ENCODE measurements at regions of chr7 and their contacts with region 1.

Region 1: GRCh38 chr7:148503875-148504487 is 86.6 kb upstream of the C7orf33 start:
- DNase-seq: no peak
- H3K4me3 Mint-ChIP-seq: no peak overlapping the region
- H3K27ac Mint-ChIP-seq: no peak overlapping the region
- H3K4me1 Mint-ChIP-seq: peaks cover 32% of the 10 kb centered on the region
- H3K27me3 Mint-ChIP-seq: peaks cover 21% of the 10 kb centered on the region

Region 2: DNA sequence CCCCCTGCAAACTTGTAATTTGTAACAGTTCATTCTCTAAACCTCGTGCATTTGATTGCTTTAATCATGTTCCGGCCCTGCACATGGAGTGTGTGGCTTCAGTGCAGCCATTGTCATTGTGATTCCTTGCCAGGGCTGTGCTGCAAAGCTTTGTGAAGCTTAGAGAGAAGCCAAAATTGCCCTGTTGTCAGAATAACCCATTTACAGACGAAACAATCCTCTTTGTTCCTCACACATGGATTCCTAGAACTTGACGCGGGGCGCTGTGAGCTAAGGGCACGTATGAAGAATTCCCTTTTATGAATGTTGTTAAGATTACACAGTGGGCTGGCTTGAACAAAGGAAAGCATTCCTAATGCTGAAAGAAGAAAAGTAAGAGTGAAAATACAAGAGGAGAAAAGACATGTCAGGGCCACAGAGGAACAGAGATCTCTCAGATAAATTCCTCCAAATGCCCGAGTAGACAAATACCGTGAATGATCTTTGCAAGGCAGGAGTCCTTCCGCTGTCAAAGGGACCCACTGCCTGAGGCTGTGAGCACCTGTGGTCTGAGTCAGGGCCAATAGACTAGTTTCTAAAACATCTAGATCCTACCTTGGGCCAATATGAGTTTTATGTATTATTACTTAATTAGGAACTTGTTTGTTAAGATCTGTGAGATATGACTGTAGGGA is 118.8 kb before region 1 on chr7:
- CTCF ChIA-PET with region 1: no interaction called
- intact Hi-C with region 1: no loop called
- DNase-seq: no peak
- H3K4me3 Mint-ChIP-seq: no peak overlapping the region
- H3K27ac Mint-ChIP-seq: no peak overlapping the region
- H3K4me1 Mint-ChIP-seq: no peaks in the 10 kb centered on the region
- H3K27me3 Mint-ChIP-seq: peaks cover 3% of the 10 kb centered on the region

Region 3: DNA sequence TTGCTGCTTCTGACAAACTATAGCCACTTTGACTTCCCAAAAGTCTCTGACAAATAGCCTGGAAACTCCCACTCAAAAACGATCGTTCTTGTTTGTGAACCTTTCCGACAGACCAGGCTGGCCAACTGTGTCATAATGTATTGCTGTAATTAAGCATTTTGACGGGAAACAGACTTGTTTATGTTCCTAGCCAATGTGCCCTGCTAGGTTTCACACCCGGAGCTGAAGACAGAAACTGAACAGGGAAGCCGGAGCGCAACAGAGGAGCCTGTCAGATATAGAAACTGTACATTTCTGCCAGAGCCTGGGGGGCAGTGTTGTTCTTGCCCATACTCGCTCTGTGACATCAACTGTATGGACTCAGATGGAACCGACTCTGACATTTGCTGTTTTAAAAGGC is 31.2 kb after region 1 on chr7:
- CTCF ChIA-PET with region 1: interaction called, 4 read pairs
- intact Hi-C with region 1: loop called (anchors 1 kb)
- DNase-seq: peak; percentile 79
- H3K4me3 Mint-ChIP-seq: peak overlapping the region; percentile 69
- H3K27ac Mint-ChIP-seq: peak overlapping the region; percentile 76
- H3K4me1 Mint-ChIP-seq: peaks cover 10% of the 10 kb centered on the region
- H3K27me3 Mint-ChIP-seq: peaks cover 10% of the 10 kb centered on the region

Region 4: DNA sequence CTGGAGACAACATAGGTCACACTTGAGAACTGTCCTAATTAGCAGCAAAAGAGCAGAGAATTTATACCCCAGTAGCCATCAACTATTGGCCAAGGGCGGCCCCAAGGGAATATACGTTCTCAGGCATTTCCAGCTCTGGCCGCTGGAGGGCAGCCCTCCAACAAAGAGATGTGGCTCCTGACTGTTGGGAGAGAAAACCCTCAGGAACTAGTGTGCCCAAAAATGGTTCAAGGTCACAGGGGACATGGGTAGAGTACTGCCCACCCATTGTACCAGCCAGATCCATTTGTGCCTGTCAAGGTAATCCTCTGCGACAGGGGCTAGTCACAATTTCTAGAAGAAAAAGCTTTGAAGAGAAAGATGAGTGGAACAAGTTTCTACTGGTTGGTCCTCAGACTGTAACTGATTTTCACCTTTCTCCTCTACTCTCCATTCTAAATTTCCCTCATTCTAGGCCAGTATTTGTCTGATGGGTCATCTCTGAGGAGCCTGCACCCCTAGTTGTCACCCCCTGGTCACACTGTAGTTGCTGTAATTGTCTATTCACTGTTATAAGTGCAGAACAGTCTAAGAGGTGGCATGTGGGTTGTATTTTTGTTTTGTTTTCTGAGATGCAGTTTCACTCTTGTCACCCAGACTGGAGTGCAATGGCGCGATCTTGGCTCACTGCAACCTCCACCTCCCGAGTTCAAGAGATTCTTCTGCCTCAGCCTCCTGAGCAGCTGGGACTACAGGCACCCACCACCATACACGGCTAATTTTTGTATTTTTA is 71.8 kb after region 1 on chr7:
- CTCF ChIA-PET with region 1: interaction called, 4 read pairs
- intact Hi-C with region 1: loop called (anchors 1 kb)
- DNase-seq: peak; percentile 84
- H3K4me3 Mint-ChIP-seq: no peak overlapping the region
- H3K27ac Mint-ChIP-seq: no peak overlapping the region
- H3K4me1 Mint-ChIP-seq: peaks cover 11% of the 10 kb centered on the region
- H3K27me3 Mint-ChIP-seq: no peaks in the 10 kb centered on the region

Region 5: GRCh38 chr7:148633761-148634160 is 129.8 kb after region 1 on chr7:
- CTCF ChIA-PET with region 1: no interaction called
- intact Hi-C with region 1: loop called (anchors 5 kb)
- DNase-seq: peak; percentile 44
- H3K4me3 Mint-ChIP-seq: no peak overlapping the region
- H3K27ac Mint-ChIP-seq: peak overlapping the region; percentile 75
- H3K4me1 Mint-ChIP-seq: peaks cover 26% of the 10 kb centered on the region
- H3K27me3 Mint-ChIP-seq: no peaks in the 10 kb centered on the region

Region 6: DNA sequence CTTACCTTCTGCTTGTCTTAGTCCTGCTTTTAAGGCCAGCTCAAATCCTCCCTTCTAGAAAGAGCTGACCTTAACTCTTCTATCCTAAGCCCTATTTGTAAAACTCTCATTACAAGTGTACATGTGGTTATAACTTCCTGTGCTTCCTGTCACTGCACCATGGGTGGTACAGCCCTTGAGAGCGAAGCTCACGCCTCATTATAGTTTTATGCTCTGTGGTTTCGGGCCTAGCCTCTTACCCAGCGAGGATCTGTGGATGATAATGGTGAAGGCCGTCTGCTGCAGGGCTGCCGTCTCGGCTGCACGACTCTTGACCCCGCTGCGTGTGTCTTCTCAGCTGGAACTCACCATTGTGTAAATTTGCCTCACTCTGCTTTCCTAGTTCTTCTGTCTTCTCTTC is 269.4 kb after region 1 on chr7:
- CTCF ChIA-PET with region 1: no interaction called
- intact Hi-C with region 1: loop called (anchors 1 kb)
- DNase-seq: peak; percentile 54
- H3K4me3 Mint-ChIP-seq: no peak overlapping the region
- H3K27ac Mint-ChIP-seq: peak overlapping the region; percentile 71
- H3K4me1 Mint-ChIP-seq: peaks cover 29% of the 10 kb centered on the region
- H3K27me3 Mint-ChIP-seq: no peaks in the 10 kb centered on the region

Region 7: DNA sequence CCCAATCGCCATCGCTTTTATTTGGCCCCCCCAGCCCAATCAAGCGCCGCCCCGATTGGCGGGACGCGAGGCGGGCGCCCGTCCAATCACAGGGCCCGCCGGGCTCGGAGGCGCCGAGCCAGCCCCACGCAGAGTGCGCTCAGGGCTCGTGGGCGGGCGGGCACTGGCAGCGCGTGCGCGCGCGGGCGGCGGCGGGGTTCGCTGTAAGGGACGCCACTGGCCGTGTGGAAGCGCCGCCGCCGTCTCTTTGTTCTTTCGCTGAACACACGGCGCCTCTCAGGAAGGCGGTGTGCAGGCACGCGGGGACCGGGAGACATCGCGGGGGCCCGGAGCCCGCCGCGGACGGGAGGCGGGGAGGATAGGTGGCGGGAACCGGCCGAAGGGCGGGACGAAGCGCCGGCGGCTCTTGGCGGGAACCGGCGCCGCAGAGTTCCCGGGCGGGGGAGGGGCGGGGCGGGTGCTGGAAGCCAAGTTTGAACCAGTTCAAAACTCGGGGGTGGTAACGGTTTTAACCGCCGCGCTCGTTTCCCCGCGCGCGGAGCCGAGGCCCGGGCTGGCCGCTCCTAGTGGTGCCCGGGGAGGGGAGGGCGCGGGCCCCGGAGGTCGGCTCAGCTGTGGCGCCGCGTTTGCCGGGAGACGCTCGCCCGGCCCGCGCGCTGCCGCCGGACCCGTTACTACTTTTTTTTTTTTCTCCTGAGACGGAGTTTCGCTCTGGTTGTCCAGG is 380.5 kb after region 1 on chr7:
- CTCF ChIA-PET with region 1: no interaction called
- intact Hi-C with region 1: loop called (anchors 1 kb)
- DNase-seq: peak; percentile 93
- H3K4me3 Mint-ChIP-seq: peak overlapping the region; percentile 94
- H3K27ac Mint-ChIP-seq: peak overlapping the region; percentile 99
- H3K4me1 Mint-ChIP-seq: peaks cover 37% of the 10 kb centered on the region
- H3K27me3 Mint-ChIP-seq: no peaks in the 10 kb centered on the region

Region 8: DNA sequence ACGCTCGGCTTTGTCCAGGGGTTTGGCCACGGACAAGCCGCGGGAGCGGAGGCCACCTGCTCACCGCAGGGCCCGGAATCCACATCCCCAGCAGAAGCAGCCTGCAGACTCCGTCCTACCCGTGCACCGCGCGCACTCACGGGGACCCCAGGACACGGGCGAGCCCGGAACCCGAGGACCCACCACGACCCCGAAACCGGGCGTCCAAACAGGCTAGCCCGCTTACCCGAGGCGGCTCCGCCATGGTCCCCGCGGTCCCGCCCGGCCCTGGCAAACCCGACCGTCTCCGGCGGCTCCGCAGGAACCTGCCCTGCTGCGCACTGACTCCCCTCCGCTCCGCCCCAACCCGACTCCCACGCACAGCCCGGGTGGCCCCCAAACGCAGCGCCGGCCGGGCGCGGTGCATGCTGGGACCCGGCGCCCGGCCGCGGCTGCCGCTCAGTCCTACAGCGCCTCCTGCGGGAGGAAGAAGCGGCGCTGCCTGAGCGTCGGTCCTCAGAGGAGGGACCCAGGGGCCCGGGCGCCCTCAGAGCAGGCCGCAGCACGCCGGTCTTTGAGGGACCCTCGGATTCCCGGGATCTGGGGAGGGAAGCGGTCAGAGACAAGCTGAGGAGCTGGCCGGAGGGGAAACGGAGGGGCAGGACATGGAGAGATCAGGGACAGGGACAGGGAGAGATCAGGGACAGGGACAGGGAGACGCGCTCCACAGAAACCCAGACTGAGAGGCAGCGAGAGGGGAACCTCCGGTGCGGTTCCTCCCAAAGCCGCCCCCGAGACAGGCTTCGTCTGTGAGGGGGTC is 586.6 kb after region 1 on chr7 and contains the start of gene ZNF786:
- CTCF ChIA-PET with region 1: no interaction called
- intact Hi-C with region 1: loop called (anchors 1 kb)
- DNase-seq: peak; percentile 94
- H3K4me3 Mint-ChIP-seq: peak within 1 kb of the TSS; percentile 90
- H3K27ac Mint-ChIP-seq: peak within 1 kb of the TSS; percentile 99
- H3K4me1 Mint-ChIP-seq: peaks cover 20% of the 10 kb centered on the region
- H3K27me3 Mint-ChIP-seq: no peaks in the 10 kb centered on the region
- total RNA-seq, gene ZNF786: 2.1 to 2.2 TPM